Activated CD8-positive, alpha-beta T cell treated with anti-CD3 and anti-CD28 coated beads for 36 hours (primary cell): ENCODE measurements at regions of chr17 and their contacts with region 1.

Region 1: GRCh38 chr17:60036796-60037612 is 41.7 kb downstream of the HEATR6 start:
- DNase-seq: peak; percentile 84
- ATAC-seq: peak; percentile 93
- H3K4me3 Mint-ChIP-seq: no peak overlapping the region
- H3K27ac Mint-ChIP-seq: no peak overlapping the region
- H3K4me1 Mint-ChIP-seq: peaks cover 5% of the 10 kb centered on the region
- H3K27me3 Mint-ChIP-seq: peaks cover 10% of the 10 kb centered on the region
- CTCF ChIP-seq: peak; percentile 95

Region 2: GRCh38 chr17:59746849-59747445 is 290.1 kb before region 1 on chr17:
- CTCF ChIA-PET with region 1: interaction called, 19 read pairs
- POLR2A ChIA-PET with region 1: no interaction called
- intact Hi-C with region 1: loop called (anchors 10 kb)
- DNase-seq: no peak
- ATAC-seq: peak; percentile 53
- H3K4me3 Mint-ChIP-seq: no peak overlapping the region
- H3K27ac Mint-ChIP-seq: peak overlapping the region; percentile 21
- H3K4me1 Mint-ChIP-seq: peaks cover 10% of the 10 kb centered on the region
- H3K27me3 Mint-ChIP-seq: no peaks in the 10 kb centered on the region
- CTCF ChIP-seq: peak; percentile 83

Region 3: GRCh38 chr17:59914274-59914854 is 122.6 kb before region 1 on chr17:
- CTCF ChIA-PET with region 1: interaction called, 29 read pairs
- POLR2A ChIA-PET with region 1: interaction called, 3 read pairs
- intact Hi-C with region 1: no loop called
- DNase-seq: no peak
- ATAC-seq: no peak
- H3K4me3 Mint-ChIP-seq: no peak overlapping the region
- H3K27ac Mint-ChIP-seq: no peak overlapping the region
- H3K4me1 Mint-ChIP-seq: no peaks in the 10 kb centered on the region
- H3K27me3 Mint-ChIP-seq: no peaks in the 10 kb centered on the region
- CTCF ChIP-seq: peak; percentile 69

Region 4: GRCh38 chr17:60049936-60050335 is 12.9 kb after region 1 on chr17:
- CTCF ChIA-PET with region 1: interaction called, 55 read pairs
- POLR2A ChIA-PET with region 1: no interaction called
- intact Hi-C with region 1: no loop called
- DNase-seq: no peak
- ATAC-seq: no peak
- H3K4me3 Mint-ChIP-seq: no peak overlapping the region
- H3K27ac Mint-ChIP-seq: no peak overlapping the region
- H3K4me1 Mint-ChIP-seq: no peaks in the 10 kb centered on the region
- H3K27me3 Mint-ChIP-seq: no peaks in the 10 kb centered on the region
- CTCF ChIP-seq: no peak

Region 5: DNA sequence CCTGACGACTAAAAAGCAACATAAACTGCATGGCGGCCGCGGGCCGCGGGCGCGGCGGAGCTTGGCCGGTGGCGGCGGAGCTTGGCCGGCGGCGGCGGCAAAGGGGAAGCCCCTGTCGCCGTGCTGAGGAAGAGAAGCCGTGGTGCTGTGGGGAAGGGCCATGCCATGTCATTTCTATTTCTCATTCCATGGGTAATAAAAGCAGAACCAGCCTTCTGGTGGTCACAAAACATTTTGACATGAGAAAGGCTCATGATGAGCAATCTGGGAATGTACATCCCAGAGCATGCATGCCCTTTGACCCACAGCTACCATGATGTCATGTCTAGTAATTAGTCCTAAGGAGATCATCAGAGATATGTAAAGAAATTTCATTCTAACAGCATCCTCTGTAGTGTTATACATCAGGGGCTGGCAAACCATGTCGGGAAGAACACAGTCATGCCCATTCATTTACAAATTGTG is 65.7 kb after region 1 on chr17:
- CTCF ChIA-PET with region 1: no interaction called
- POLR2A ChIA-PET with region 1: no interaction called
- intact Hi-C with region 1: no loop called
- DNase-seq: peak; percentile 45
- ATAC-seq: peak; percentile 83
- H3K4me3 Mint-ChIP-seq: peak overlapping the region; percentile 62
- H3K27ac Mint-ChIP-seq: no peak overlapping the region
- H3K4me1 Mint-ChIP-seq: peaks cover 17% of the 10 kb centered on the region
- H3K27me3 Mint-ChIP-seq: peaks cover 27% of the 10 kb centered on the region
- CTCF ChIP-seq: no peak